ENCODE measurements at regions of chr4 and their contacts with region 1.

Region 1: GRCh38 chr4:3725936-3726870 is 40.0 kb upstream of the ADRA2C start:
- DNase-seq: no peak
- H3K4me3 ChIP-seq: no peak overlapping the region
- H3K27ac ChIP-seq: no peak overlapping the region
- H3K4me1 ChIP-seq: no peaks in the 10 kb centered on the region
- H3K27me3 ChIP-seq: peaks cover 0 to 96% of the 10 kb centered on the region in 2 donors
- CTCF ChIP-seq: no peak
- POLR2A ChIP-seq: no peak

Region 2: GRCh38 chr4:3705236-3705987 is 20.8 kb before region 1 on chr4:
- intact Hi-C with region 1: loop called (anchors 1 kb)
- DNase-seq: no peak
- H3K4me3 ChIP-seq: no peak overlapping the region
- H3K27ac ChIP-seq: no peak overlapping the region
- H3K4me1 ChIP-seq: no peaks in the 10 kb centered on the region
- H3K27me3 ChIP-seq: peaks cover 4 to 65% of the 10 kb centered on the region in 2 donors
- CTCF ChIP-seq: no peak
- POLR2A ChIP-seq: no peak